Activated B cell treated with CpG ODN at 0.5 μM for 24 hours (primary cell): ENCODE measurements at regions of chr5 and their contacts with region 1.

Region 1: GRCh38 chr5:54541823-54542783 is 24.5 kb downstream of the SNX18 start:
- DNase-seq: no peak
- ATAC-seq: no peak
- H3K4me3 Mint-ChIP-seq: no peak overlapping the region
- H3K27ac Mint-ChIP-seq: peak overlapping the region; percentile 50
- H3K4me1 Mint-ChIP-seq: peaks cover 43% of the 10 kb centered on the region
- H3K27me3 Mint-ChIP-seq: no peaks in the 10 kb centered on the region
- CTCF ChIP-seq: no peak

Region 2: DNA sequence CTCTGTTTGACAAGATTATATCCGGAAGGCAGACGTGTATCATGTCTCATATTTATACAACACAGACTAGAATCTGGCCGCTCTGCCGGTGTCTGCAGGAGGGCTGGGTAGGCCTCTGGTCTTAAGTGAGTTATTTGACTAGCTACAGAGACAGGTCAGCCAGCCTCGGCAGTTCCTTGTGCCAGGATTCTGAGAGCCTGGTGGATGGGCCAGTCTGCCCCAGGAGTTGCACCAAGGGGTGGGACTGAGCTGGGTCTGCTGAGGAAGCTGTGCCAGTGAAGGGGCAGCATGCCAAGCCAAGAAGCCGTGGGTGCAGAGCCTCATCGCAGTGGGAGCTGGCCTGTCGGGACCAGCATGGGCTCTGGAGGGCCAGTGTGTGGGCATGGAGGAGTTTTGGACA is 17.4 kb before region 1 on chr5:
- CTCF ChIA-PET with region 1: no interaction called
- POLR2A ChIA-PET with region 1: no interaction called
- intact Hi-C with region 1: loop called (anchors 2 kb)
- DNase-seq: no peak
- ATAC-seq: no peak
- H3K4me3 Mint-ChIP-seq: no peak overlapping the region
- H3K27ac Mint-ChIP-seq: no peak overlapping the region
- H3K4me1 Mint-ChIP-seq: peaks cover 6% of the 10 kb centered on the region
- H3K27me3 Mint-ChIP-seq: no peaks in the 10 kb centered on the region
- CTCF ChIP-seq: no peak

Region 3: DNA sequence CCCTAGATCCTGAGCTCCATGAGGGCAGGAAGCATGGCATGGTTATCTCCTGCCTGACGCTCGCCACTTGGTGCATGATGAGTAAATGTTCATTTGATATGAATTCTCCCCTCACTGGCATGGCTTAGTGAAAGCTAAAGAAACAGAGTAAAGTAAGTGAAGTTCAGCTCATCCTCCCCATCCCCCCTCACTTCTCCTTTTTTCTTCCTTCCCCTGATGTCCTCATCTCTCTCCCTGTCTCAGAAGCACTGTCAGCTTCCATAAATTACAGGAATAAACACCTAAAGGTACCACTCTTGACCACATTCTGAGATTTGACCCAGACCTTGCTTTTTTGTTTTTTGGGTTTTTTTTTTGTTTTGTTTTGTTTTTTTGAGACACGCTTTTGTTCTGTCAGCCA is 48.7 kb after region 1 on chr5:
- CTCF ChIA-PET with region 1: no interaction called
- POLR2A ChIA-PET with region 1: no interaction called
- intact Hi-C with region 1: loop called (anchors 5 kb)
- DNase-seq: no peak
- ATAC-seq: no peak
- H3K4me3 Mint-ChIP-seq: no peak overlapping the region
- H3K27ac Mint-ChIP-seq: no peak overlapping the region
- H3K4me1 Mint-ChIP-seq: peaks cover 12% of the 10 kb centered on the region
- H3K27me3 Mint-ChIP-seq: no peaks in the 10 kb centered on the region
- CTCF ChIP-seq: no peak

Region 4: DNA sequence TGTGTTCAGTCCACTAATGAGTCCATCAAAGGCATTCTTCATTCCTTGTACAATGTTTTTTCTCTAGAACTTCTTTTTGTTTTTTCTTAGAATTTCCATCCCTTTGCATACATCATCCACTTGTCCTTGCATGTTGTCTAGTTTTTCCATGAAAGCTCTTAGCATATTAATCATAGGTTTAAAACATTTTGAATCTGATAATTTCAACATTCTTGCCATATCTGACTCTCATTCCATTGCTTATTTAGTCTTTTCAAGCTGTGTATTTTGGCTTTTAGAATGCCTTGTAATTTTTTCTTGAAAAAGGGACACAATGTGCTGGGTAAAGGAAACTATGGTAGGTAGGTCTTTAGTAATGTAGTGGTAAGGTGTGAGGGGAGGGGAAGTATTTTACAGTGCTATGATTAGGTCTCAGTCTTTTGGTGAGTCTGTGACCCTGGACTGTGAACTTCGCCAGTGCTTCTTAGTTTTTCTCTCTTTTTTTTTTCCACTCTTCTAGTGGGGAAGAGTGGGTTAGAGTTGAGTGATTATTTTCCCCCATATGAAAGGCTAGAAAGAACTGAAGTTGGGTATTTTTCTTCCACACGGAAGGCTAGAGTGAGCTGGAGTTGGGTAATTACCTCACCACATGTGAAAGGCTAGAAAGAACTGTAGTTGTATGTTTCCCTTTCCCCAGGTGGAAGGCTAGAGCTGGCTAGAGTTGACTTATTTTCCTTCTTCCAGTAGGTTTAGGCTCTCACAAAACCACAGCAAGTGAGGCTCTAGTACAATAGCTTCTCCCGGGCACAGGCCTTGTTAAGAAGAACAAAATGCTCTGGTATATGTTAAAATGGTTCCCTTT is 147.5 kb after region 1 on chr5:
- CTCF ChIA-PET with region 1: no interaction called
- POLR2A ChIA-PET with region 1: no interaction called
- intact Hi-C with region 1: no loop called
- DNase-seq: no peak
- ATAC-seq: no peak
- H3K4me3 Mint-ChIP-seq: no peak overlapping the region
- H3K27ac Mint-ChIP-seq: no peak overlapping the region
- H3K4me1 Mint-ChIP-seq: peaks cover 43% of the 10 kb centered on the region
- H3K27me3 Mint-ChIP-seq: no peaks in the 10 kb centered on the region
- CTCF ChIP-seq: no peak

Region 5: GRCh38 chr5:54889826-54890225 is 347.7 kb after region 1 on chr5:
- CTCF ChIA-PET with region 1: no interaction called
- POLR2A ChIA-PET with region 1: no interaction called
- intact Hi-C with region 1: no loop called
- DNase-seq: no peak
- ATAC-seq: no peak
- H3K4me3 Mint-ChIP-seq: no peak overlapping the region
- H3K27ac Mint-ChIP-seq: no peak overlapping the region
- H3K4me1 Mint-ChIP-seq: no peaks in the 10 kb centered on the region
- H3K27me3 Mint-ChIP-seq: peaks cover 56% of the 10 kb centered on the region
- CTCF ChIP-seq: no peak

Region 6: DNA sequence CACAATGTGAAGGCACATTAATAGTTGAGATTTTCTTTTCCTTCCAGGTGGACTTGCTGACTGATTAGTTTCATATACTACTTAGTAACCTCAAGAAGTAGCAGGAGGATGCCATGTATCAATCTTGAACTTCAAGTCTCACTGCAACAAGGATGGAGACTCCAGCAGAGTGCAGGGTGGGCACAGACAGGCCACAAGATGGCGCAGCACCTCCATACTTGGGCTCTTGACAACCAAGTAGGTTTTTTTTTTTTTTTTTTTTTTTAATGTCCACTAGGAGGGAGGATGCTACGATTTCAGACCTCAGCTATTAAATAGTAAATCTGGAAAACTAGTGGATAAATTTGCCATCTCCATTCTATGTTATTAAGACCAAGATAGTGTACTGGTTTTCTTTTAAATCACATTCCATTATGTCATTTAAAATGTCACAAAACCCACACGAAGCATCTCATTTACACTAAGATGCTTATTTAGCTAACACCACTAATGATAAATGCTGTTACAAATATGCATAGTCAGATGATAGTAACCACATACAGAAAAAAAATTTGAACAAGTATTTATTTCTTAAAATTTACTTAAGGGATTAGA is 1394.1 kb after region 1 on chr5:
- CTCF ChIA-PET with region 1: no interaction called
- POLR2A ChIA-PET with region 1: no interaction called
- intact Hi-C with region 1: no loop called
- DNase-seq: peak; percentile 56
- ATAC-seq: peak; percentile 93
- H3K4me3 Mint-ChIP-seq: no peak overlapping the region
- H3K27ac Mint-ChIP-seq: no peak overlapping the region
- H3K4me1 Mint-ChIP-seq: no peaks in the 10 kb centered on the region
- H3K27me3 Mint-ChIP-seq: no peaks in the 10 kb centered on the region
- CTCF ChIP-seq: peak; percentile 48